T-cell (primary cell): ENCODE measurements at regions of chr16 and their contacts with region 1.

Region 1: DNA sequence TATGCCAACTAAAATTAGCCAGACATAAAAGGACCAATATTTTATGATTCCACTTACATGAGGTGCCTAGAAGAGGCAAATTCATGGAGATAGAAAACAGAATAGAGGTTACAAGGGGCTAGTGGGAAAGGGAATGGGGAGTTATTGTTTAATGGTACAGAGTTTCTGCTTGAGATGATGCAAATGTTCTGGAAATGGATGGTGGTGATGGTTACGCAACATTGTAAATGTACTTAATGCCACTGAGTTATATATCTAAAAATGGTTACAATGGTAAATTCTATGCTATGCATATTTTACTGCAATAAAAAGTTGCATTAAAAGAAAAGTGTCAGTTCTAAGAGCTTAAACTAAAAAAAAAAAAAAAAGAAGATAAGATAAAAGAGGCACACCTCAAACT is 17.9 kb downstream of the MT1X start:
- DNase-seq: no peak
- ATAC-seq: no peak
- H3K4me3 ChIP-seq: no peak overlapping the region
- H3K4me3 Mint-ChIP-seq: no peak overlapping the region
- H3K27ac ChIP-seq: no peak overlapping the region
- H3K27ac Mint-ChIP-seq: no peak overlapping the region
- H3K4me1 ChIP-seq: peaks cover 0 to 3% of the 10 kb centered on the region in 2 experiments
- H3K4me1 Mint-ChIP-seq: peaks cover 0 to 10% (median 8%) of the 10 kb centered on the region in 3 donors
- H3K27me3 ChIP-seq: peaks cover 0 to 6% of the 10 kb centered on the region in 2 experiments
- H3K27me3 Mint-ChIP-seq: no peaks in the 10 kb centered on the region

Region 2: GRCh38 chr16:56513972-56514371 is 186.2 kb before region 1 on chr16:
- CTCF ChIA-PET with region 1: interaction called, 6 to 38 read pairs
- POLR2A ChIA-PET with region 1: no interaction called
- DNase-seq: peak in 33 of 35 experiments; percentile 8 to 71 (median 46)
- ATAC-seq: peak; percentile 74 to 91 (median 86)
- H3K4me3 ChIP-seq: no peak overlapping the region
- H3K4me3 Mint-ChIP-seq: no peak overlapping the region
- H3K27ac ChIP-seq: no peak overlapping the region
- H3K27ac Mint-ChIP-seq: peak overlapping the region in 1 of 2 donors; percentile 12
- H3K4me1 ChIP-seq: peaks cover 0 to 12% of the 10 kb centered on the region in 2 experiments
- H3K4me1 Mint-ChIP-seq: peaks cover 53 to 63% (median 60%) of the 10 kb centered on the region in 3 donors
- H3K27me3 ChIP-seq: no peaks in the 10 kb centered on the region
- H3K27me3 Mint-ChIP-seq: no peaks in the 10 kb centered on the region

Region 3: DNA sequence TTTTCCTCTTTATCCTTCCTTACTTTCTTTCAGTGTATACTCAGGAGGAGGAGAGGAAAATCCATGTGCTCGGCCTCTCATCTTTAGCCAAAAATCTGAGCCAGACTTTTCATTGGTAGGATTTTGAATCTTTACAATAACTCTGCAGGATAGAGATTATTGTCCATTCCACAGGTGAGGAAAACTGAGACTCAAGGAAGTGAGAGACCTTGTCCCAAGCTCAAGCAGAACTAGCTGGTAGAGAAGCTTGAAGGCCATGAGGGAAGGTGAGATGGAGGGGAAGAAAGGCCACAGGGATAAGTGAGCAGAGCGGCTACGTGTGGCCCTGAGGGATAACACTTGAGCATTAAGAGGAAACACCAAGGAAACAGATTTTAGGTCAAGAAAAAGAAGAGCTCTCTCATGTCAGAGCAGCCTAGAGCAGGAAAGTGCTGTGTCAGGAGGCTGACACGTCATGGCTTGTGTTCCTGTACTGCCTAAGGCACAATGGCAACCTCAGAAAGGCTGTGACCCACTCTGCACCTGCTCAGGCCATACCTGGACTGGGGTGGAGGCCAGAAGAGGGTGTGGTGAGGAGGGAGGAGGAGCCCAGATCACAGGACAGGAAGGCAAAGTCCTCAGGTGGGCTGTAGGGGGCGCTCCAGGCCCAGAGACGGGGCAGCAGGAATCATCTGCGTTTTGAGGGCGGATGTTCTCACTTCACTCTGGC is 123.5 kb before region 1 on chr16:
- CTCF ChIA-PET with region 1: interaction called, 35 to 93 read pairs
- POLR2A ChIA-PET with region 1: no interaction called
- DNase-seq: peak; percentile 65 to 92 (median 85)
- ATAC-seq: peak; percentile 99 to 100 (median 100)
- H3K4me3 ChIP-seq: no peak overlapping the region
- H3K4me3 Mint-ChIP-seq: no peak overlapping the region
- H3K27ac ChIP-seq: no peak overlapping the region
- H3K27ac Mint-ChIP-seq: peak overlapping the region in 1 of 2 donors; percentile 73
- H3K4me1 ChIP-seq: peaks cover 0 to 8% of the 10 kb centered on the region in 2 experiments
- H3K4me1 Mint-ChIP-seq: peaks cover 6 to 10% (median 8%) of the 10 kb centered on the region in 3 donors
- H3K27me3 ChIP-seq: no peaks in the 10 kb centered on the region
- H3K27me3 Mint-ChIP-seq: no peaks in the 10 kb centered on the region

Region 4: DNA sequence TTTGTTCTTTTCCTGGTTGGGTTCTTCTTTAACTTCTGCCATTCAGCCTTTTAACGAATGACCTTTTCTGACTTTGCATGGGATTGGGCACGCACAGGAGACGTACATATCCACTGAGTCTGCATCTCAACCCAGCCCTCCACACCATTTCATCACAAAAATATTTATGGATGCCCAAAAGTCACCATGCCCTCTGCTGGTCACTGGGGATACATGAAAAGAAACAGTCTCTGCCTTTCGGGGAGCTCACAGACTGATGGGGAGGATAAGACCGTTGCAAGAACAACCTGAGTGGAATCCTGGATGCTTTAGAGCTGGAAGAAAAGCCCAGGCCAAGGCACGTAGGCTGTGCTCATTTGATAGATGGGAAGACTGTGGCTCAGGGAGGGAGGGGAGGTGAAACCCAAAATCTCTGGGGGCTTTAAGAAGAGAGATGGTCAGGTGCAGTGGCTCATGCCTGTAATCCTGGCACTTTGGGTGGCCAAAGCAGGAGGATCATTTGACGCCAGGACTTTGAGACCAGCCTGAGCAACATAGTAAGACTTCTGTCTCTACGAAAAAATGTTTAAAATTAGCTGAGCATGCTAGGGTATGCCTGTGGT is 99.7 kb before region 1 on chr16:
- CTCF ChIA-PET with region 1: interaction called, 3 to 24 read pairs
- POLR2A ChIA-PET with region 1: interaction called in 1 of 2 experiments, 5 read pairs
- DNase-seq: peak in 9 of 35 experiments; percentile 8 to 65 (median 23)
- ATAC-seq: peak in 2 of 4 experiments; percentile 50 to 59
- H3K4me3 ChIP-seq: no peak overlapping the region
- H3K4me3 Mint-ChIP-seq: no peak overlapping the region
- H3K27ac ChIP-seq: no peak overlapping the region
- H3K27ac Mint-ChIP-seq: no peak overlapping the region
- H3K4me1 ChIP-seq: peaks cover 0 to 3% of the 10 kb centered on the region in 2 experiments
- H3K4me1 Mint-ChIP-seq: peaks cover 0 to 2% (median 2%) of the 10 kb centered on the region in 3 donors
- H3K27me3 ChIP-seq: peaks cover 0 to 16% of the 10 kb centered on the region in 2 experiments
- H3K27me3 Mint-ChIP-seq: peaks cover 4 to 11% of the 10 kb centered on the region in 2 donors

Region 5: DNA sequence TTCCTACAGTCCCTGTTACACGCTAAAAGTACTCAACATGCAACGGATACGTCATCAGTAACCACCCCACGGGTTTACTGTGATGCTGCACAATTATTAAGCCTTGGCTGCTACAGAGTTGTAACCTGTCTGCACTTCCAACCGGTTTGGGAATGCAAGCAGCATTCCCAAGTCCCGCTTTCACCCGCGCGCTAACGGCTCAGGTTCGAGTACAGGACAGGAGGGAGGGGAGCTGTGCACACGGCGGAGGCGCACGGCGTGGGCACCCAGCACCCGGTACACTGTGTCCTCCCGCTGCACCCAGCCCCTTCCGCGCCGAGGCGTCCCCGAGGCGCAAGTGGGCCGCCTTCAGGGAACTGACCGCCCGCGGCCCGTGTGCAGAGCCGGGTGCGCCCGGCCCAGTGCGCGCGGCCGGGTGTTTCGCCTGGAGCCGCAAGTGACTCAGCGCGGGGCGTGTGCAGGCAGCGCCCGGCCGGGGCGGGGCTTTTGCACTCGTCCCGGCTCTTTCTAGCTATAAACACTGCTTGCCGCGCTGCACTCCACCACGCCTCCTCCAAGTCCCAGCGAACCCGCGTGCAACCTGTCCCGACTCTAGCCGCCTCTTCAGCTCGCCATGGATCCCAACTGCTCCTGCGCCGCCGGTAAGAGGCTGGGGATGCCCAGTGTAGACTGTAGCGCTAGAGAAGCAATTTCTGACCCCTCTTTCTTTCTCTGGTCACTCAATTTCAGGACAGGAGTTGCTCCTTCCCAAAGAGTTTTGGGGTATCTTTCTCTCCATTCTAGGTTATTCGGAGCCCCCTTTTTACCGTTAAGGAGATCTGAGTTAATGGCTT is 91.9 kb before region 1 on chr16 and contains the start of gene MT2A:
- CTCF ChIA-PET with region 1: interaction called, 13 to 24 read pairs
- POLR2A ChIA-PET with region 1: interaction called in 1 of 2 experiments, 5 read pairs
- DNase-seq: peak; percentile 69 to 92 (median 82)
- ATAC-seq: peak; percentile 75 to 95 (median 92)
- H3K4me3 ChIP-seq: peak within 1 kb of the TSS; percentile 66 to 67
- H3K4me3 Mint-ChIP-seq: peak within 1 kb of the TSS; percentile 91 to 96 (median 94)
- H3K27ac ChIP-seq: peak within 1 kb of the TSS; percentile 95
- H3K27ac Mint-ChIP-seq: peak within 1 kb of the TSS; percentile 93 to 98
- H3K4me1 ChIP-seq: peaks cover 27 to 51% of the 10 kb centered on the region in 2 experiments
- H3K4me1 Mint-ChIP-seq: peaks cover 45 to 55% (median 51%) of the 10 kb centered on the region in 3 donors
- H3K27me3 ChIP-seq: no peaks in the 10 kb centered on the region
- H3K27me3 Mint-ChIP-seq: no peaks in the 10 kb centered on the region
- total RNA-seq, gene MT2A: 46.8 to 71.4 (median 57.1) TPM

Region 6: GRCh38 chr16:56643080-56643778 is 57.0 kb before region 1 on chr16:
- CTCF ChIA-PET with region 1: interaction called, 3 to 11 read pairs
- POLR2A ChIA-PET with region 1: no interaction called
- DNase-seq: peak; percentile 35 to 87 (median 57)
- ATAC-seq: peak; percentile 99 to 100 (median 100)
- H3K4me3 ChIP-seq: peak overlapping the region; percentile 42 to 60
- H3K4me3 Mint-ChIP-seq: peak overlapping the region; percentile 69 to 71 (median 70)
- H3K27ac ChIP-seq: no peak overlapping the region
- H3K27ac Mint-ChIP-seq: peak overlapping the region in 1 of 2 donors; percentile 49
- H3K4me1 ChIP-seq: peaks cover 2 to 22% of the 10 kb centered on the region in 2 experiments
- H3K4me1 Mint-ChIP-seq: peaks cover 21 to 27% (median 24%) of the 10 kb centered on the region in 3 donors
- H3K27me3 ChIP-seq: peaks cover 34 to 37% of the 10 kb centered on the region in 2 experiments
- H3K27me3 Mint-ChIP-seq: peaks cover 31 to 35% of the 10 kb centered on the region in 2 donors